Right lobe of liver (tissue), 6 donors: ENCODE measurements at regions of chr9 and their contacts with region 1.

Region 1: DNA sequence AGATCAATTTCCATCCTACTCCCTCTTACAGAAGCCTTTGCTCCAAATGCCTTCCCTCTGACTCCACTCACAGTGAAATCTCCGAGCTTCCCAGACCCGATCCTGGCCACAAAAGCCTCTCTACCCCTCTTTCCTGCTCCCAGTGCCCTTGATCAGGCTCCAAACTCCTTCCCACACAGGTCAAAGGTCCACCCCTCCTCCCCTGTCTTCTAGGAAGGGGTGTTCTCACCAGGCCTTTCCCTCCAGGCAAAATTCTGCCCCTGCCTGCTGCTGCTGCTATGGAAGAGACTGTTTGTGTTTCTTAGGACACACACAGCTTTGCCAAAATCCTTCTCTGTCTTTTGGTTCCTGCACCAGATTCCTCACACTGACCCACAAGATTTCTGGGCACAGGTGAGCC is 85.8 kb upstream of the ALDH1A1 start:
- DNase-seq: peak; percentile 29 to 64 (median 61)
- ATAC-seq: peak; percentile 64 to 76 (median 68)
- H3K4me3 ChIP-seq: peak overlapping the region in 2 of 3 donors; percentile 9 to 16
- H3K27ac ChIP-seq: peak overlapping the region; percentile 40 to 77 (median 52)
- H3K4me1 ChIP-seq: peaks cover 0 to 24% (median 9%) of the 10 kb centered on the region in 4 donors
- H3K27me3 ChIP-seq: no peaks in the 10 kb centered on the region
- CTCF ChIP-seq: no peak
- POLR2A ChIP-seq: no peak

Region 2: DNA sequence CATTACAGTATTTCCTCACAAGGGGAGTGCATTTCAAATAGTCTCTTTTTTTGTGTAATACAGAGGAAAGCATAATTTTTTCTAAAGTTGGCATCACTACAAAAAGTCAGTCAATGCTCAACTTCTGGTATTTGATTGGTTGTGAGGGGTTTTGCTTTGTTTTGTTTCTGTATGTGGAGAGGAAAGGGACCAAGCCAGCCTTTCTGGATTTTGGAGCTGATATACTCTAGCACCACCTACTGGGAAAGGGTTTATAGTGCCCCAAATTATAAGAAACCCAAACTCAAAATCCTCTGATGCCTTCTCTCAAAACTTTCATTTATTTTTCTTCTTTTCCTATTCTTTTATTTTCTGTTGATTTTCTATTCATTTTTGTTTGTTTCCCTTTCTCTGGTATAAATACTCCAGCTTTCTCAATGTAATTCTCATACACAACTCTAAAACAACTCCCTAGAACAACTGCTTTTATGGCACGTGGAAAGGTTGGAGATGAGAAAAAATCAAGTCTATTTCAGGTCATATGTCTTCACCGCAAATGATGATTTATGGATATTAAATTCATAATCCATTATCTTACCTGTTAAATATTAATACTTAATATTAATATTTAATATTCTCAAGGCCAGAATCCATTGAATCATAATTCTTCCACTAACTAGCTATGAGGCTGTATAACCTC is 43.5 kb after region 1 on chr9:
- intact Hi-C with region 1: loop called in 1 of 2 experiments (anchors 10 kb)
- DNase-seq: no peak
- ATAC-seq: peak; percentile 82 to 88 (median 86)
- H3K4me3 ChIP-seq: no peak overlapping the region
- H3K27ac ChIP-seq: peak overlapping the region in 1 of 3 donors; percentile 60
- H3K4me1 ChIP-seq: peaks cover 0 to 16% (median 8%) of the 10 kb centered on the region in 4 donors
- H3K27me3 ChIP-seq: no peaks in the 10 kb centered on the region
- CTCF ChIP-seq: peak; percentile 77 to 83 (median 82)
- POLR2A ChIP-seq: no peak